ENCODE measurements at regions of chrX and their contacts with region 1.

Region 1: DNA sequence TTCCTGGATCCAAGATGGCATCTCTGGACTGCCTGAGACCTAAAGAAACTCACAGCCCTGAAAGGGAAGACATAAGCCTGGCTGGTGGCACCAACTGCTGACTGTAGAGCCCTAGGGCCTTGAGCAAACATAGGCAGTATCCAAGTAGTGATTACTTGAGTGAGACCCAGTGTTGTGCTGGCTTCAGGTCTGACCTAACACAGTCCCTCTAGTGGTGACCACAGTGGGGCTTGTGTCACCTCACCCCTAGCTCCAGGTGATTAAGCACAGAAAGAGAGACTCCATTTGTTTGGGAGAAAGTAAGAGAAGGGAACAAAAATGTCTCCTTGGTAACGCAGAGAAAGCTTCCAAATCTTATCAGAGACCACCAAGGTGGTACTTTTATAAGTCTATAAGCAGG is 496.3 kb upstream of the HTR2C start:
- DNase-seq: no peak
- H3K4me3 ChIP-seq: no peak overlapping the region
- H3K4me1 ChIP-seq: no peaks in the 10 kb centered on the region
- H3K27me3 ChIP-seq: no peaks in the 10 kb centered on the region

Region 2: DNA sequence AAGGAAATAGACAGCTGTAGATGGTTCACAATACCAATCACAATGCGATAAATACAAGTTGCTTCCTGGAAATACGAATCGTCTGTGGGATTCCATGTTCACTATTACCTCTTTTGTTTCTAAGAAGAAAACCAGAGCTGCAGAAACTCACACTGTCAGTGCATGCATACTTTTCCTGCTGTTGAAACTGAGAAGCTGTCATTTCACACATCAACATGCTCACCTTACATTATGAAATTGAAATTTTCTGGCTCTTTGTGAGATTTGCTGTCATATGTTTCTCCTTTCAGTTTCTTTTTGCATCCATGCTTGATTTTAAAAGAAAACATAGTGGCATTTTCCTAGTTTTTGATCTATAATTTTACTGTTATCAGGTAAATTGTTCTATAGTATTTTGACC is 78.0 kb after region 1 on chrX:
- in situ Hi-C with region 1: no loop called
- DNase-seq: no peak
- H3K4me3 ChIP-seq: no peak overlapping the region
- H3K4me1 ChIP-seq: no peaks in the 10 kb centered on the region
- H3K27me3 ChIP-seq: no peaks in the 10 kb centered on the region

Region 3: GRCh38 chrX:114519524-114519923 is 432.0 kb after region 1 on chrX:
- in situ Hi-C with region 1: loop called (anchors 10 kb)
- DNase-seq: no peak
- H3K4me3 ChIP-seq: no peak overlapping the region
- H3K4me1 ChIP-seq: no peaks in the 10 kb centered on the region
- H3K27me3 ChIP-seq: no peaks in the 10 kb centered on the region

Region 4: DNA sequence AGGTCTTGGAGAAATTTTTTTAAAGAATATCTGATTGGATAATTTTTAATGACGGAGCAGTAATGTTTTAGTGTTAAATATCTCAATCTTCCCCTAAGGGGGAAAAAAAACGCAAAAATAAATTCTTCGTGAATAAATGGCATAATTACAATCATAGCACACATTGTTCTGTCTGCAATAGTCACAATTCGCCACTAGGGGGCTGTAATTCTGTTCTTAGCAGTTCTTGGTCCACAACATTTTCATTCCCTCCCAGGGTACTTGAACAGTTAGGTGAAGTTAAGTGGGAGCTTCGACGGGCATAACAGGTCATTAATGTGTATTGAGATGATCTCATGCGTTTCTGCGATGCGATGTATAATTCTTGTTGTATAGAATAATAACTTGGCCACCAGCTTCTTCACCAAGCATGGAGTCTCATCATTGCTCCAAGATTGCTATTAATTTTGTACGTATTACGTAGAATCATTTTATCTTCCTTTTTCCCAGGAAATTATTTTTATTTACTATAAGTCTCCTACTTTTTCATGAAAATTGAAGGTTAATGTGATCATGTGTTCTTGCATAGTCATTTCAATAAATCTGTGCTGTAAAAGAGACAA is 523.6 kb after region 1 on chrX:
- in situ Hi-C with region 1: no loop called
- DNase-seq: peak; percentile 56 to 65
- H3K4me3 ChIP-seq: no peak overlapping the region
- H3K4me1 ChIP-seq: peaks cover 11% of the 10 kb centered on the region
- H3K27me3 ChIP-seq: no peaks in the 10 kb centered on the region

Measured in HAP-1 (cell line).